ENCODE measurements at regions of chr2 and their contacts with region 1.

Region 1: GRCh38 chr2:74587664-74588277 is 33.3 kb downstream of the DOK1 start:
- DNase-seq: peak; percentile 33 to 66
- H3K4me3 ChIP-seq: no peak overlapping the region
- H3K27ac ChIP-seq: no peak overlapping the region
- H3K4me1 ChIP-seq: peaks cover 0 to 2% (median under 1%) of the 10 kb centered on the region in 4 experiments; a peak in 1 of 7 replicates
- H3K27me3 ChIP-seq: no peaks in the 10 kb centered on the region
- CTCF ChIP-seq: peak; percentile 26 to 71 (median 70)
- EP300 ChIP-seq: no peak
- POLR2A ChIP-seq: no peak
- RAD21 ChIP-seq: peak; percentile 89 to 90

Region 2: GRCh38 chr2:74447230-74447999 is 140.4 kb before region 1 on chr2:
- CTCF ChIA-PET with region 1: no interaction called
- POLR2A ChIA-PET with region 1: no interaction called
- DNase-seq: no peak
- H3K4me3 ChIP-seq: no peak overlapping the region
- H3K27ac ChIP-seq: no peak overlapping the region
- H3K4me1 ChIP-seq: 0 out of 7 replicates have a peak, but pooled peaks cover 0 to 2% (median 0%) of the 10 kb centered on the region in 4 experiments
- H3K27me3 ChIP-seq: no peaks in the 10 kb centered on the region; a peak in 2 of 7 replicates
- CTCF ChIP-seq: no peak
- EP300 ChIP-seq: no peak
- POLR2A ChIP-seq: no peak
- RAD21 ChIP-seq: no peak

Region 3: GRCh38 chr2:74458132-74458925 is 129.4 kb before region 1 on chr2 and contains the start of gene WBP1:
- CTCF ChIA-PET with region 1: interaction called, 19 read pairs
- POLR2A ChIA-PET with region 1: no interaction called
- DNase-seq: peak; percentile 98 to 100
- H3K4me3 ChIP-seq: peak within 1 kb of the TSS; percentile 83 to 99 (median 98)
- H3K27ac ChIP-seq: peak within 1 kb of the TSS; percentile 95
- H3K4me1 ChIP-seq: peaks cover 0 to 10% (median 2%) of the 10 kb centered on the region in 4 experiments; a peak in 5 of 7 replicates
- H3K27me3 ChIP-seq: no peaks in the 10 kb centered on the region
- CTCF ChIP-seq: no peak
- EP300 ChIP-seq: no peak
- POLR2A ChIP-seq: peak in 1 of 2 experiments; percentile 83; a peak in 2 of 3 replicates
- RAD21 ChIP-seq: no peak
- total RNA-seq, gene WBP1: 51.4 and 57.2 TPM in 2 replicates

Region 4: GRCh38 chr2:74482801-74483674 is 104.7 kb before region 1 on chr2 and contains the starts of genes CCDC142 and TTC31:
- CTCF ChIA-PET with region 1: interaction called, 45 read pairs
- POLR2A ChIA-PET with region 1: interaction called, 9 read pairs
- DNase-seq: peak; percentile 83 to 96
- H3K4me3 ChIP-seq: peak within 1 kb of the TSS; percentile 69 to 99 (median 93)
- H3K27ac ChIP-seq: peak within 1 kb of the TSS; percentile 92
- H3K4me1 ChIP-seq: peaks cover 0 to 10% (median 4%) of the 10 kb centered on the region in 4 experiments; a peak in 4 of 7 replicates
- H3K27me3 ChIP-seq: no peaks in the 10 kb centered on the region; a peak in 1 of 7 replicates
- CTCF ChIP-seq: peak; percentile 81 to 95 (median 89)
- EP300 ChIP-seq: no peak
- POLR2A ChIP-seq: peak in 1 of 2 experiments; percentile 91; a peak in 2 of 3 replicates
- RAD21 ChIP-seq: peak; percentile 79 to 85
- total RNA-seq, gene CCDC142: 10.7 and 12.1 TPM in 2 replicates
- total RNA-seq, gene TTC31: 27.4 and 28.8 TPM in 2 replicates

Region 5: DNA sequence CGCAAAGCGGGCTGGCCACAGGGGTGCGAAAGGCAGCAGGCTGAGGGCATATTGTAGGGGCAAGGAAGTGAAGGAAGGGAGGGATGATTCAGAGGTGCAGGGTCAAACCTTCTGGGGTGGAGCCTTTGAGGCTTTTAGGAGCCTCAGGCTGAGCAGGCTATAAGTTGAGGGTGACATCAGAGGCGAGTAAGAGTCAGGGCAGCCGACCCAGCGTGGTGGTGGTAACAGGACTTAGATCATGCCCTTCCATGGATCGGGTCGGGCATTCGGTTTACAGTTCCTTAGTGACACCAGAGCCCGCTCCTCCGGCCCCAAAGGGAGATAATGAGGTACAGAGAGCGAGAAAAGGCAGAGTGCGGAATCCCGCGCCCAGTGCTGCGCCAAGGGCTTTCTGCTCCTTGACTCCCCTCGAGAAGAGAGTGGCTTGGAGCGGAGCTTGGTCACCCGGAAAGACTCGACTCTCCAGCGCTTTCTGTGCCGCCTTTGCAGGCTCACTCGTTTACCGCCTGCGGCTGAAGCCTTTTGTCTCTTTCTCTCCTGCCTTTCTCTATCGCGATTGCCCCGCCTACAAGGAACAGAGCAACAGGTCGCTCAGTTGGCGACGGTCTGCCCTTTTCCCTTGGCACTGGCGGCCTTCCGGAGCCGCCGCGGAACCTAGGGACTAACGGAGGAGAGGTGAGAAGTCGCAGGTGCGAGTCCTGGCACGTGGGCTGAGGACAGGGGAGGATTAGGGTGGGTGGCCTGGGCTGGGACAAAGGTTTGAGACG is 89.1 kb before region 1 on chr2:
- CTCF ChIA-PET with region 1: interaction called, 37 read pairs
- POLR2A ChIA-PET with region 1: interaction called, 5 read pairs
- DNase-seq: peak in 1 of 2 experiments; percentile 83
- H3K4me3 ChIP-seq: peak overlapping the region; percentile 20 to 57 (median 46); a peak in 7 of 8 replicates
- H3K27ac ChIP-seq: no peak overlapping the region
- H3K4me1 ChIP-seq: peaks cover 7 to 53% (median 31%) of the 10 kb centered on the region in 4 experiments
- H3K27me3 ChIP-seq: peaks cover 75 to 88% (median 87%) of the 10 kb centered on the region in 4 experiments
- CTCF ChIP-seq: no peak
- EP300 ChIP-seq: no peak
- POLR2A ChIP-seq: no peak
- RAD21 ChIP-seq: no peak

Region 6: DNA sequence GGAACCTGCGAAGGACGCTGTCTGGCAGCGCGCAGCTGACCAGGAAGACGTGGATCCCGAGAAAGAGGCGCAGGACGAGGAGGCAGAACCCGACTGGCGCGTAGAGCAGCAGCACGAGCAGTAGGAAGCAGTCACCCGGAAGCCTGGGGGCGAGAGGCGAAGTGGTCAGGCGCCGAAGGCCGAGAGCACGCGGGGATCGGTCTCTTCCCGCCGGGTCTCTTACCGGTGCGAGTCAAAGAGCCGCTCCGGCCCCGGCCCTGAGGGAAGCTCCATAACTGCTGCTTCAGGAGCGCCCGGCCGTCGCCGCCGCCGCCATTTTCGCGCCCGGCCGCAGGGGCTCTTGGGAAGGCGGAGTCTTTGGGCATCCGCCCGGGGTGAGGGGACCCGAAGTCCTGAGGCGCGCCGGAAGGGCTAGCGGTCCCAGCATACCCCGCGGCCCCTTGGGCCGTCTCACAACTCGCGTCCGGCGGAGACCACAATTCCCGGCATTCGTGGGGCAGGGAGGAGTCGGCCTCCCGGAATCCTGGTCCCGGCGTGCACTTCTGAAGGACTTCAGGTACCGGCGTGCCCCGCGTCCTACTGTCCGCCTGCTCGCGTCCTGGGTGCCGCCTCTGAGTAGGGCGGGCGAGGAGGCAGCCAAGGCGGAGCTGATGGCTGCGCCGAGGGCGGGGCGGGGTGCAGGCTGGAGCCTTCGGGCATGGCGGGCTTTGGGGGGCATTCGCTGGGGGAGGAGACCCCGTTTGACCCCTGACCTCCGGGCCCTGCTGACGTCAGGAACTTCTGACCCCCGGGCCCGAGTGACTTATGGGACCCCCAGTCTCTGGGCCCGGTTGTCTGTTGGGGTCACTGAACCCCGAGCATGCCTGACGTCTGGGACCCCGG is 58.2 kb before region 1 on chr2 and contains the starts of genes AUP1 and HTRA2:
- CTCF ChIA-PET with region 1: interaction called, 53 read pairs
- POLR2A ChIA-PET with region 1: interaction called, 9 read pairs
- DNase-seq: peak; percentile 94 to 95
- H3K4me3 ChIP-seq: peak within 1 kb of the TSS; percentile 85 to 99 (median 92)
- H3K27ac ChIP-seq: peak within 1 kb of the TSS; percentile 90
- H3K4me1 ChIP-seq: peaks cover 4 to 13% (median 6%) of the 10 kb centered on the region in 4 experiments; a peak in 6 of 7 replicates
- H3K27me3 ChIP-seq: no peaks in the 10 kb centered on the region; a peak in 1 of 7 replicates
- CTCF ChIP-seq: no peak
- EP300 ChIP-seq: peak in 1 of 2 experiments; percentile 5; a peak in 1 of 3 replicates
- POLR2A ChIP-seq: peak in 1 of 2 experiments; percentile 94; a peak in 2 of 3 replicates
- RAD21 ChIP-seq: 0 out of 4 replicates have a peak, but pooled peaks of 1 of the 2 experiments have one; percentile 3
- total RNA-seq, gene AUP1: 82.7 and 83.4 TPM in 2 replicates
- total RNA-seq, gene HTRA2: 21.6 and 24.6 TPM in 2 replicates

Region 7: DNA sequence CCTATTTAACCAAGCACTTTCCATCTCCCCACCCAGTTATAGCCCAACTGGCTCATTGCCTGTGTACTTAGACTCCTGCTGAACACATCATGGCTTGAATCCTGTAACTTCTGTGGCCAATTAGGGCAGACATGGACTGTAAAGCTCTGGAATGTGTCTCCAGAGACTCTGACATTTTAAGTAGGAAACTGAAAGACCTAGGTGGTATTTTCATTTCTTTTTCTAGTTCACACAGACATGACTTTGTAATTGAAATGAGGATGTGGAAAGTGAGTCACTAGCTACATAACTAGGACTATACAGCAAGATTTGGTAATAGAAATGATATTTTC is 21.1 kb before region 1 on chr2:
- CTCF ChIA-PET with region 1: interaction called, 158 read pairs
- POLR2A ChIA-PET with region 1: no interaction called
- DNase-seq: no peak
- H3K4me3 ChIP-seq: no peak overlapping the region
- H3K27ac ChIP-seq: no peak overlapping the region
- H3K4me1 ChIP-seq: no peaks in the 10 kb centered on the region
- H3K27me3 ChIP-seq: peaks cover 0 to 2% (median 0%) of the 10 kb centered on the region in 4 experiments; a peak in 1 of 7 replicates
- CTCF ChIP-seq: no peak
- EP300 ChIP-seq: no peak
- POLR2A ChIP-seq: no peak
- RAD21 ChIP-seq: no peak

Region 8: DNA sequence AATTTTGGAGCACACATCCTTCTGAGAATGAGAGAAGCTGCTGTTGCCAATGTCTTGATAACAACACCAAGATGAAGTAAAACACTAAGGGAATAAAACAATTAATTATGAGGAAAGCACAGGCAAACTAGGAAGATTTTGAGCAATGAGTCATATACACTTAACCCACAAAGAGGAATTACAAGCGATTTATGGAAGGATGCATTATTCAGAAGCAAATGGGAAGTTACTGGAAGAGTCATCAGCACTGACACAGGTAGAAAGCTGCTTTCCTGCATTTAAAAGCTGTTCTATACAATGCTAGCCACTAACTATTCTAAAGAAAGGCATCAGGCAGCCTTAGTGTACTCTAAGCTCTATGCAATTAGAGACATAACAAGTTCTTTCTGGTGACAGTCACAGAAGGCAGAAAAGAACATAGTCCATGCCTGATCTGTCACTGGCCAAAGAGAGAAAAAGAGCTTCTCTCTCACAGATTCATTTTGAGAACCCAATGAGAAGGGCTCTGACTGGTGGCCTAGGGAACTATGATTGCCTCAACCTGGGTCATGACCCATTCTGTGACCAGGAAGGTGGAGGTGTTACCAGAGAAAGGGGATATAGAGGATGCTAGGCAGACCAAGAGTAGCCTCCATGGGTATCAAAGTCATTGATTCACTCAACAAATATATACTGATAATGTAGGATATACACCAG is 15.0 kb after region 1 on chr2:
- CTCF ChIA-PET with region 1: interaction called, 50 read pairs
- POLR2A ChIA-PET with region 1: no interaction called
- DNase-seq: no peak
- H3K4me3 ChIP-seq: no peak overlapping the region
- H3K27ac ChIP-seq: no peak overlapping the region
- H3K4me1 ChIP-seq: no peaks in the 10 kb centered on the region
- H3K27me3 ChIP-seq: peaks cover 0 to 2% (median 0%) of the 10 kb centered on the region in 4 experiments; a peak in 1 of 7 replicates
- CTCF ChIP-seq: no peak
- EP300 ChIP-seq: no peak
- POLR2A ChIP-seq: no peak
- RAD21 ChIP-seq: no peak

Measured in H1 (cell line).